Activated naive CD4-positive, alpha-beta T cell treated with anti-CD3 and anti-CD28 coated beads for 36 hours (primary cell): ENCODE measurements at regions of chrX and their contacts with region 1.

Region 1: GRCh38 chrX:13688958-13689740 is at the start of gene RAB9A:
- DNase-seq: peak; percentile 83
- H3K4me3 Mint-ChIP-seq: peak within 1 kb of the TSS; percentile 82
- H3K27ac Mint-ChIP-seq: peak within 1 kb of the TSS; percentile 96
- H3K4me1 Mint-ChIP-seq: peaks cover 65% of the 10 kb centered on the region
- H3K27me3 Mint-ChIP-seq: no peaks in the 10 kb centered on the region
- total RNA-seq, gene RAB9A: 22.8 to 23.3 TPM

Region 2: GRCh38 chrX:13653022-13653693 is 36.0 kb before region 1 on chrX and contains the start of gene TCEANC:
- CTCF ChIA-PET with region 1: interaction called, 3 read pairs
- intact Hi-C with region 1: loop called (anchors 1 kb)
- DNase-seq: peak; percentile 95
- H3K4me3 Mint-ChIP-seq: peak within 1 kb of the TSS; percentile 88
- H3K27ac Mint-ChIP-seq: peak within 1 kb of the TSS; percentile 93
- H3K4me1 Mint-ChIP-seq: peaks cover 24% of the 10 kb centered on the region
- H3K27me3 Mint-ChIP-seq: no peaks in the 10 kb centered on the region
- total RNA-seq, gene TCEANC: 2.5 to 2.7 TPM

Region 3: DNA sequence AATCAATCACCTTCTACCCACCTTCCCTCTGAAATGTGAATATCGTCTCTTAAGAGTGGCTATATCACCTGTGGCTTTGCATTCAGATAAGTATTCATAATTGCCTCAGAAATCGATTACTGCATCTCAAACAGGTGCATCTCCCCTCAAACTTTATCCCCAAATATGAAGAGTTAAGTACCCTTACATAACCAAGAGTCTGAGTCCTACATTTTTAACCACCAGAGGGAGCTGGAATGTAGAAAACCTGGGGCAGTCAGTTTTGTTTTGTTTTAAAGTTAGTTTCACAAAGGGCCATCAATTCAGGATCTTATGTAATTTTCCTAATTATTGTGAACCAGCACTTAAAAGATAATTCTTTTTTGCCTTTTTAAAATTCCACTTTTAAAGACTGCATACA is 30.5 kb before region 1 on chrX:
- CTCF ChIA-PET with region 1: interaction called, 4 read pairs
- intact Hi-C with region 1: loop called (anchors 1 kb)
- DNase-seq: no peak
- H3K4me3 Mint-ChIP-seq: no peak overlapping the region
- H3K27ac Mint-ChIP-seq: no peak overlapping the region
- H3K4me1 Mint-ChIP-seq: peaks cover 32% of the 10 kb centered on the region
- H3K27me3 Mint-ChIP-seq: no peaks in the 10 kb centered on the region

Region 4: GRCh38 chrX:13734278-13735172 is 45.4 kb after region 1 on chrX and contains the starts of genes OFD1 and TRAPPC2:
- CTCF ChIA-PET with region 1: interaction called, 8 read pairs
- intact Hi-C with region 1: loop called (anchors 1 kb)
- DNase-seq: peak; percentile 92
- H3K4me3 Mint-ChIP-seq: peak within 1 kb of the TSS; percentile 95
- H3K27ac Mint-ChIP-seq: peak within 1 kb of the TSS; percentile 92
- H3K4me1 Mint-ChIP-seq: peaks cover 43% of the 10 kb centered on the region
- H3K27me3 Mint-ChIP-seq: no peaks in the 10 kb centered on the region
- total RNA-seq, gene OFD1: 25.3 to 26.2 TPM
- total RNA-seq, gene TRAPPC2: 9.6 to 10.7 TPM

Region 5: DNA sequence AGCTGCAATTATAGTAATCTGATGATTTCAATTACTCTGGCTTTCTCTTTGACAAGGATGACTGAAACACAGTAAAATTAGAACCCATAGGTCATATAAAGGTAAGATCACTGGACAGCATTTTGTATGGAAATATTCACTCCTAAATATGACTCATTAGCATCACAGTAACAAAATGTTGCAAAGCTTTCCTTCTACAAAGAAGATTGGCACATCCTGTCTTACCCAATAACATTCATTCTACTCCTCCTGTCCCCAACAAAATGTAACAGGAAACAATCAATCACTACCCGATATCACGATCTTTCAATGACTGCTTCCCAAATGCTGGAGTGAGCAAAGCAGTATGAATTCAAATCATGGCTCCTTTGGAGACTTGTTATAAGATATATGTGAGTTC is 1088.4 kb after region 1 on chrX:
- CTCF ChIA-PET with region 1: no interaction called
- intact Hi-C with region 1: no loop called
- DNase-seq: no peak
- H3K4me3 Mint-ChIP-seq: no peak overlapping the region
- H3K27ac Mint-ChIP-seq: no peak overlapping the region
- H3K4me1 Mint-ChIP-seq: peaks cover 2% of the 10 kb centered on the region
- H3K27me3 Mint-ChIP-seq: peaks cover 2% of the 10 kb centered on the region